ENCODE measurements at regions of chr9 and their contacts with region 1.

Region 1: DNA sequence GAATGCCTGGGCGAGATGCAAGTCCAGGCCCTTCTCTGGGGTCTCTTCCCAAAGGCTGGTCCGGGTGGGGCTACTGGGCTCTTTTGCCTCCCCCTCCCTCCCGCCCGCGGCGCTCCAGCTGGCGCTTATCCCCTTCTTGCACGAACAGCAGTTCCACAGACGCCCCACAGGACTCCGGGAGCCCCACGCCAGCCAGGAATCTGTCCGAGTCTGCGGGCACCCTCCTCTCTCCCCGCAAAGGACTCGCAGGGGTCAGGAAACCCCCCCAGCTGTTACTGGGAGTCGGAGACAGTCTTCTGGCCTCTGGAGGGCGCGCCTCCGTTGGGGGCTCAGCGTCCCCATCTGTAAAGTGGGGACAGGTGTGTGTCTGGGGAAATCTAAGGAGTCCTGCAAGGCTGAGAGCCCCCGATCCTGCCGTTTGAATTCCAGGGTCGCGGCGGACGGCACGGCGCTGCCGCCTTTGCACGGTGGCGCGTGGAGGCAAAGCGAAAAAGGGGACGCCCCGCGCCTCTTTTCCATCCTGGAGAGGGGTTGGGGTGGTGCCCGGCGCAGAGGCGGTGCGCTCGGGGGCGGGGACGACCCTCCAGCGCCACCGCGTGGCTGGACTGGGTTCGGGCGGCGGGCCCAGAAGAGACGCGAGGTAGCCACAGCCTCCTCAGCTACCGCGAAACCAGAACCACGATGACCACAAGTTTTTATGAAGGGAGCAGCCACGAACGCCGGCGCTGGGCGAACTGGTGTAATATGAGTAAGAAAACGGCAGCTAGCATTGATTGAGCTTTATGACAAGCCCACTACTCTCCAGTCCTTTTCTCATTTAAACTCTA is 2.9 kb upstream of the CCIN start:
- DNase-seq: peak; percentile 71
- H3K4me3 Mint-ChIP-seq: no peak overlapping the region
- H3K27ac Mint-ChIP-seq: no peak overlapping the region
- H3K4me1 Mint-ChIP-seq: no peaks in the 10 kb centered on the region
- H3K27me3 Mint-ChIP-seq: peaks cover 7% of the 10 kb centered on the region
- CTCF ChIP-seq: peak; percentile 60

Region 2: DNA sequence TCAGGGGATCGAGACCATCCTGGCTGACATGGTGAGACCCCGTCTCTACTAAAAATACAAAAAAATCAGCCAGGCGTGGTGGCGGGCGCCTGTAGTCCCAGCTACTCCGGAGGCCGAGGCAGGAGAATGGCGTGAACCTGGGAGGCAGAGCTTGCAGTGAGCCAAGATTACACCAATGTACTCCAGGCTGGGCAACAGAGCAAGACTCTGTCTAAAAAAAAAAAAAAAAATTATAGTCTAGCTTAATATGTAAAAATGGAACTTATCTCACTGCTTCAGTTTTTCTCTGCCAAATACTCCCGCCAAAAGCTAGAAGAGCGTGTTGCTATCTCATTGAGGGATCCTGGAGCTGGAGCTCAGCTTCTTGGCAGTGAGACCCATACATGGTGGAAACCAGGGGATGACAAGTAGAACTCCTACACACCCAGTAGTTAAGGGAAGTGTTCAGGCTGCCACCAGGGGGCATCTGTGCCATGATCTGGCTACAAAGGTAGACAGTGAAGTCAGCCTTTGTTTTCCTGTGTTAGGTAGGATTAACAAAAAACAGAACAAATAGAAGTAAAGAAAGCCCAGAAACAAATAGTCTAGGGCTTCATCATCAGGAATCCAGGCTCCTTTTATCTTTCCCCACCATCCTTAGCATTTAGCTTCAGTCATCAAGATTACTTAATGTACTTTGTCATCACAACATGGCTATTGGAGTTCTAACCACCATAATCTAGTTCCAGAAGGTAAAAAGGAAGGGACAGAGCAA is 63.4 kb before region 1 on chr9:
- CTCF ChIA-PET with region 1: interaction called, 4 read pairs
- intact Hi-C with region 1: loop called (anchors 1 kb)
- DNase-seq: peak; percentile 59
- H3K4me3 Mint-ChIP-seq: no peak overlapping the region
- H3K27ac Mint-ChIP-seq: no peak overlapping the region
- H3K4me1 Mint-ChIP-seq: no peaks in the 10 kb centered on the region
- H3K27me3 Mint-ChIP-seq: no peaks in the 10 kb centered on the region
- CTCF ChIP-seq: peak; percentile 26